Adrenal gland (tissue), 19 donors: ENCODE measurements at regions of chr21 and their contacts with region 1.

Region 1: GRCh38 chr21:33655591-33656221 is 13.4 kb downstream of the ITSN1 start:
- DNase-seq: peak in 6 of 7 donors; percentile 54 to 82 (median 74)
- H3K4me3 ChIP-seq: no peak overlapping the region
- H3K27ac ChIP-seq: peak overlapping the region; percentile 61 to 80 (median 74)
- H3K4me1 ChIP-seq: peaks cover 44 to 68% of the 10 kb centered on the region in 2 donors
- H3K27me3 ChIP-seq: no peaks in the 10 kb centered on the region
- CTCF ChIP-seq: peak in 2 of 6 experiments; percentile 4 to 17
- POLR2A ChIP-seq: no peak

Region 2: GRCh38 chr21:33707846-33708245 is 52.1 kb after region 1 on chr21:
- intact Hi-C with region 1: loop called in 1 of 2 experiments (anchors 5 kb)
- DNase-seq: no peak
- H3K4me3 ChIP-seq: no peak overlapping the region
- H3K27ac ChIP-seq: no peak overlapping the region
- H3K4me1 ChIP-seq: peaks cover 0 to 7% of the 10 kb centered on the region in 2 donors
- H3K27me3 ChIP-seq: no peaks in the 10 kb centered on the region
- CTCF ChIP-seq: no peak
- POLR2A ChIP-seq: no peak

Region 3: DNA sequence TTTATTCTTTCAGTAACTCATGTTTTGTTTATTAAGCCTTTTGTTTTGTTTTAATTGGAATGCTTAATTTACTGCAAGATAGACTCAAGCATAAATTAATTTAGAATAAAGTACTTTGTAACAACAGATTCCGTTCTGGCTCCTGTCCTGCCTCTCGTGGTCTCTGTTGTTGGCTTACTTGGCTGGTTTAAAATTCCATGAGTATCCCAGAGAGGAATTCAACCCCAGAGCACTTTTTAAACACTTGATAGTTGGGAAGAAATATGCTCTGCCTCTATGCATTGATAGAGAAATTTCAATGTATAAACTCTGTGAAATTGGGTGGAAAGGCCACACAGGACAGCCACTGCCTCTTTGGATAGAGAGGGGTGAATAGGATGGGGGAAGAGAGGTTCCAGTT is 170.2 kb after region 1 on chr21:
- intact Hi-C with region 1: loop called in 1 of 2 experiments (anchors 10 kb)
- DNase-seq: no peak
- H3K4me3 ChIP-seq: no peak overlapping the region
- H3K27ac ChIP-seq: no peak overlapping the region
- H3K4me1 ChIP-seq: peaks cover 0 to 8% of the 10 kb centered on the region in 2 donors
- H3K27me3 ChIP-seq: no peaks in the 10 kb centered on the region
- CTCF ChIP-seq: no peak
- POLR2A ChIP-seq: no peak